ENCODE measurements at regions of chr3 and their contacts with region 1.

Region 1: GRCh38 chr3:150495563-150496168 is 50.6 kb downstream of the SERP1 start:
- DNase-seq: no peak
- ATAC-seq: peak; percentile 51

Region 2: GRCh38 chr3:150238998-150239619 is 256.6 kb before region 1 on chr3:
- intact Hi-C with region 1: loop called in 1 of 2 experiments (anchors 10 kb)
- DNase-seq: peak in 1 of 2 donors; percentile 25
- ATAC-seq: peak; percentile 91

Region 3: DNA sequence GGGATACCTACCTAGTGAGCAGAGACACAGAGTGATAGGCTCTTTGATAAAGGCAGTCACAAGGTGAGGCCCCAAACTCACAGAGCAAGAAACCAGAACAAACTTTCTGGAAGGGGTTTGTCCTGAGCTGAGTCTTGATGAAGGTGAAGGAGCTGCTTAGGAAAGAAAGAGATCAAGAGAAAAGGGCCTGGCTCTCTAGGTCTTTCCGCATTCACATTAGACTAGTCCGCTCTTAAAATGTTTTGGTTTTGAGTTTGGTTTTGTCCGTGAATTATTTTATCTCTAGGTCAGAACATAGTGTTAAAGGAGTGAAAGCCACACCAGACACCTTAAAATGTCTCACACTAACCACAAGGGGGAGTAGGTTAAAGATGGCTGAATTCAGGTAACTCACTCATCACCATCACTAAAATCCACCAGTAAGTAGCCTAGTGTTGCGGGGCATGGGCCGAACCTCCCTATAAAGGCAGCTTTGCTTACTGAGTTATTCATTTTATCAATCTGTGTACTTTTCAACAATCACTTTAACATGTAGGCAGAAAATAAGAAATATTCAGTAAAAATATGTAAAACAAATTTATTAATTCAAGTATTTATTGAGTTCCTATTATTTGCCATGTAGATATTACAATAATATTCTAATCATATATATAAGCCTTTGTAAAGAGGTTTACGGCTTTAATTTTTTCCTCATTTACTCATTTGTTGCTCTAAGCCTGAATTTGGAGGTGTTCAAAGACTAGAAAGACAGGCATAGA is 209.1 kb before region 1 on chr3:
- intact Hi-C with region 1: loop called in 1 of 2 experiments (anchors 10 kb)
- DNase-seq: no peak
- ATAC-seq: peak; percentile 96

Region 4: DNA sequence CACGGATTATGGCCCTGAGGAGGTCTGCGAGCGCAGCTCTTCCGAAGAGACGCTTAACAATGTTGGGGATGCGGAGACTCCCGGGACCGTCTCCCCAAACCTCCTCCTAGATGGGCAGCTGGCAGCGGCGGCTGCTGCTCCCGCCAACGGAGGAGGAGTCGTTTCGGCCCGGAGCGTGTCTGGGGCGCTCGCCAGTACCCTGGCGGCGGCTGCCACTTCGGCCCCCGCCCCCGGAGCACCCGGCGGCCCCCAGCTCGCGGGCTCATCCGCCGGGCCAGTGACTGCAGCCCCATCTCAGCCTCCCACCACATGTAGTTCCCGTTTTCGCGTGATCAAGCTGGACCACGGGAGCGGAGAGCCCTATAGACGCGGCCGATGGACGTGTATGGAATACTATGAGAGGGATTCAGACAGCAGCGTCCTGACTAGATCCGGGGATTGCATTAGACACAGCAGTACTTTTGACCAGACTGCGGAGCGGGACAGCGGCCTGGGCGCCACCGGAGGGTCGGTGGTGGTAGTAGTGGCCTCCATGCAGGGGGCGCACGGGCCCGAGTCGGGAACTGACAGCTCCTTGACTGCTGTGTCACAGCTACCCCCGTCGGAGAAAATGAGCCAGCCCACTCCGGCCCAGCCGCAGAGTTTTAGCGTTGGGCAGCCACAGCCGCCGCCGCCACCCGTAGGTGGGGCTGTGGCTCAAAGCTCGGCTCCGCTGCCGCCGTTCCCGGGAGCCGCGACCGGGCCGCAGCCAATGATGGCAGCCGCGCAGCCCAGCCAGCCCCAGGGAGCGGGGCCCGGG is 86.0 kb before region 1 on chr3:
- intact Hi-C with region 1: loop called in 1 of 2 experiments (anchors 10 kb)
- DNase-seq: peak; percentile 76 to 84
- ATAC-seq: peak; percentile 56

Region 5: GRCh38 chr3:150528354-150528797 is 32.7 kb after region 1 on chr3:
- intact Hi-C with region 1: no loop called
- DNase-seq: no peak
- ATAC-seq: no peak

Region 6: GRCh38 chr3:150555859-150556436 is 60.3 kb after region 1 on chr3:
- intact Hi-C with region 1: no loop called
- DNase-seq: no peak
- ATAC-seq: no peak

Region 7: DNA sequence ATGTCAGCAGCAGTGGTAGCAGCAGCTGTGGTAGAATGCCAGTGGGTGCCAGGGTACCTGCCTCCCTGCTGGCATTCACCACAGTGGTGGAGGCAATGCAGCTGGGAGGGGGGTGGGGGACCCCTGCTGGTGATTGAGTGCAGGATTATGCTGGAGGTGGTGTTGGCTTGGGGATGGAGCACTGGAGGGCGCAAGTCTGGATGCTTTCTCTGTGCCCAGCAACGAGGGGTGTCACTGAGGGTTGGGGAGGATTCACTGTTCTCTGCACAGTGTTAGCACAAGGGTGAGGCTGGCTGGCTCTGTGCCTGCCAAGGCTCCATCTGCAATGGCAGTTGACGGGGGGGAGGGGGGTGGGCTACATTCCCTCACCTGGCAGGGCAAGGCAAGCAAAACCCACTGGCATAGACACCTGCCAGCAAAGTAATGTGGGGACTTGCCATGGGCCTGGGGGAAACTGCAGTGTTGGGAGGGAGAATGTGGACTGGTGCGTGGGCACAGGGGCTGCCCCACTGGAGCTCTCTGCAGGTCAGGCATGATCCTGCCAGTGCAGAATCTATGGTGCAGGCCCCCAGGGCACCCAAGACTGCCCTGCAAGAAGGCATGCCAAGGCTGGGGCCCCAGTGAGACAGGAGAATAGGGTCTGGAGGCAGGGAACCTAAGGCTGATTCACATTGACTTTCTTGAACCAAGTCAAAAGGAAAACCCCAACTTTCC is 345.3 kb after region 1 on chr3:
- intact Hi-C with region 1: no loop called
- DNase-seq: no peak
- ATAC-seq: no peak

Measured in left colon (tissue), 2 donors.